Cardiac septum (tissue), 1 donor: ENCODE measurements at regions of chr20 and their contacts with region 1.

Region 1: GRCh38 chr20:59751056-59751688 is 146.8 kb downstream of the PHACTR3 start:
- DNase-seq: no peak

Region 2: DNA sequence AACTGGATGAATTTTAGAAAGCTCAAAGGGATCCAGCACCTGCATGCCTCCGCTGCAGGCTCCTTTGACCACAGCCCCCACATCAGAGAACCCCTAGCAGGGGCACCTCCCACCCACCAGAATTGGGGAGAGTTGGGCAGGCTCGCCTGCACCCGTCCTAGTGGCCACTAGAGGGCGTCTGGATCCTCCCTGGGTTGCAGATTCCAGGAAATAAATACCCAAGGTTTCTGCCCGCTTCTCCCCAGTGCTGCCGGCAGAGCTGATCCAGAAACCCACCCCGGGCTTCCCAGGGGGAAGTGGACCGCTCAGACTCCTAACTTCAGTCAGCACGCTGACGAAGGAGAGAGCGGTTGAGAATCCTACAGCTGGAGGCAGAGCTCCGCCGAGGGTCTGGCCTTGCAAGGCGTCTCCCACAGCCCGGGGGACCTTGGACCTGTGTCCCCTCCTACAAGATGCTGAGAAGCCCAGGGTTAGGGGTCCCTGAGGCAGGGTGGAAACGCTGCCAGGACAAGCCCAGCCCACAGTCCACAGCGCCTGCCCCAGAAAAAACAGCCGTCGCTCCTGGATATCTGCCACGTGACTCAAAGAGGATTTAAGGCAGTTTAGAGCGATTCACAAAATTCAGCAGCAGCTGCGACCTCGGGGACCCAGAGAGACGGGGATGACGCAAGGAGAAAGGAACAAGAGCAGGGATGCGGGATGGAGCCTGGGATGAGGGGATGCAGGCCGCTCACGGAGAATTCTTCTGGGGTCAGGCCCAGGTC is 179.4 kb before region 1 on chr20:
- intact Hi-C with region 1: loop called (anchors 2 kb)
- DNase-seq: no peak

Region 3: DNA sequence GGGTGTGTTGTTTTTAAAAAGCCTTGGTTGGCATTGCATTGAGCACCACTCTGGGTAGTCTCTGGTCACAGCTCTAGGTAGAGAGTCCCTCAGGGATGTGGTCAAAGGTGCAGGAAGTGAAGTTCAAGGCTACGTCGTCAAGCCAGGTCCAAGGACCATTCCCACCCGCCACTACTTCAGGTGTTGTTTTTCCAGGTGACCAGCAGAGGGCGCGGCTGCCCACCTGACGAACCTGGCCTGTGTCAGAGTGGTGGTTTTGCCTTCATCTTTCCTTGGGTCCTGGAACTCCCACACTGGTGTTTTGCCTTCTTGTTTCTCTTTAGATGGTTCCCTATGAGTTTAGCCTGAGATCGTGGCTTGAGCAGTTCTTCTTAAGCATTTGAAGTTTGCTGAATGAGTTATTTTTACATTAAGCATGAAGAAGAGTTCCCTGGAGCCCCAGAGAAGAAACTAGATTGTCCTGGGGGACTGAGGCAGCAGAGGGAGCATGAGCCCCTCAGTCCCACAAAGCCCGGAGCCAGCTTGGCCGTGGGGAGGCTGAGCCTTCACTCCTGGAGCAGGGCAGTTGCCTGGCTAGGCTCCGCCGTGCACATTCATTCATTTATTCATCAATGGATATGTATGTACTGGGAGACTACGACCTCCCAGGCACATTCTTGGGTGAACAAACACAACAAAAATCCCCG is 152.4 kb before region 1 on chr20:
- intact Hi-C with region 1: loop called (anchors 2 kb)
- DNase-seq: no peak